ENCODE measurements at regions of chr12 and their contacts with region 1.

Region 1: DNA sequence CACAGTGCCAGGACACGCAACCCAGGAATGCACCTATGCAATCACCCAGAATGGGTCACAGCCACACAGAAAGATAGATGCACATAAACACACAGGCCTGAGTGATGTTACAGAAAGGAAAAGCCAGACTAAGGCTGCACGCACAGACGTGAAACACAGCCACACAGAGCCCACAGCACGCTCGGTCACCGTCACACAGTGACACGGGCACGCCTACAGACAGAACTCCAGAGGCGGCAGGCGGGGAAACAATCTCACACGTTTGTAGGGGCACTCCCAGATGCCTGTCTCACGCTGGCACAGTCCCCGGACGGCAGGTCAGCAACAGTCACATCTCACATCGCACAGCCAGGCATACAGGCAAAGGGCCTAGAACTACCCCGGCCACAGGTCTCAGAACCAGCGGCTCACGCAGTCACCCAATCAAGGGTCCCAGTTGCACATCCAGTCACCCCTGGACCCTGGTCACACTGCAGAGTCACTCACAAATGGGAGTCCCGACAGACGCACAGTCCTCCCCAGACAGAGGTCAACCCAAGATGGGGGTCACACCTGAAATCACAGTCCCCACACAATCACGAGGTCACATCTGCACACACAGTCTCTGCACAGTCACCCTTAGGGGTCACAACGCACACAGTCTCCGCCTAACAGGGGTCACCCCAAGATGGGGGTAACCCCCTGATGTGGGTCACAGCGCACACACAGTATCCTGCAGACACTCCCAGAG is 790 bp downstream of the SSH1 start:
- DNase-seq: peak; percentile 50
- H3K4me3 ChIP-seq: peak overlapping the region; percentile 85
- H3K27ac ChIP-seq: peak overlapping the region; percentile 89
- H3K4me1 ChIP-seq: peaks cover 38% of the 10 kb centered on the region
- H3K27me3 ChIP-seq: no peaks in the 10 kb centered on the region
- CTCF ChIP-seq: no peak

Region 2: GRCh38 chr12:109462710-109463692 is 606.4 kb after region 1 on chr12:
- CTCF ChIA-PET with region 1: no interaction called
- POLR2A ChIA-PET with region 1: no interaction called
- intact Hi-C with region 1: loop called (anchors 5 kb)
- DNase-seq: peak; percentile 96
- H3K4me3 ChIP-seq: peak overlapping the region; percentile 16
- H3K27ac ChIP-seq: peak overlapping the region; percentile 98
- H3K4me1 ChIP-seq: peaks cover 49% of the 10 kb centered on the region
- H3K27me3 ChIP-seq: no peaks in the 10 kb centered on the region
- CTCF ChIP-seq: no peak